Heart right ventricle (tissue), 16 donors: ENCODE measurements at regions of chr7 and their contacts with region 1.

Region 1: DNA sequence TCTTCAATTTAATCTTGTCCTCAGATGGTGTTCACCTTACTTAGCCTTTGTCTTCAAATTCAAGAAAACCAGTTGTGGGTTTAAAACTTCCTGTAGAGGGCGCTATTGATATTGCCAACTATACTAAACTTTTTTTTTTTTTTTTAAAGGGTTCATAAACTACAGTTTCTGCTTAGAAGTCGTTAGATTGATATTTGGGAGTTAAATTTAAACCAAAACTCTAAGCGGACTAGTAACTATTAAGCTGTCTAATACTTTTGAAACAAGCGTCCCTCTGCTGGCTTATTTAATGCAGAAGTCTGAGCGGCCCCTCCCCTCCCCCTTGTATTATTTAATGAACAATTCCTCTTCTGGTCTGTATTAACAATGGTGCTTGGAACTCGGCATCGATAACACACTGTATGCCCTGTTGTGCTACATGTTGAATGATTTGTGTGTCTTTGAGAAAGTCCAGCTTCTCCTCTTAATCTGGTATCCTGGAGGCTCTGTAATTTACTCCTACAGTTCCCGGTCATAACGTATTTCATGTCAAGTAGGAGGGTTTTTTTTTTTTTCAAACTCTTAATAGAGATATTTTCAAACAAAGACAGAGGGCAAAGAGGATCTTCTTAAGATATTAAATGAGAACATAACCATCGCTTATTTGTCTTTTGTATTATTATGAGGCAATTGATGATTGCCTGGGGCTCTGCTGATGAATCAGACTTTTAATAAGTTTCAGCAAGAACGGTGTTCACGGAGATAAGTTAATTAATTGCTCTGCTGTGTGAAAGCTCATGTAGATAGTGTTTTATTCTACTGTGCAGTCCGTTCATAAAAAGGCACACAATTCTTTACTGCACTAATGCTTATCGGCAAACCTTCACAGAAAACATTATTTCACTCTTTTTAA is 22.6 kb upstream of the CREB5 start:
- DNase-seq: peak in 1 of 2 donors; percentile 14
- ATAC-seq: peak in 6 of 8 donors; percentile 41 to 64 (median 48)
- H3K4me3 ChIP-seq: peak overlapping the region in 8 of 10 donors; percentile 10 to 48 (median 42)
- H3K27ac ChIP-seq: peak overlapping the region in 5 of 10 donors; percentile 8 to 42 (median 17)
- H3K4me1 ChIP-seq: peaks cover 0 to 6% (median 0%) of the 10 kb centered on the region in 9 donors
- H3K27me3 ChIP-seq: peaks cover 0 to 15% (median 0%) of the 10 kb centered on the region in 7 donors
- CTCF ChIP-seq: peak; percentile 75 to 91 (median 82)

Region 2: DNA sequence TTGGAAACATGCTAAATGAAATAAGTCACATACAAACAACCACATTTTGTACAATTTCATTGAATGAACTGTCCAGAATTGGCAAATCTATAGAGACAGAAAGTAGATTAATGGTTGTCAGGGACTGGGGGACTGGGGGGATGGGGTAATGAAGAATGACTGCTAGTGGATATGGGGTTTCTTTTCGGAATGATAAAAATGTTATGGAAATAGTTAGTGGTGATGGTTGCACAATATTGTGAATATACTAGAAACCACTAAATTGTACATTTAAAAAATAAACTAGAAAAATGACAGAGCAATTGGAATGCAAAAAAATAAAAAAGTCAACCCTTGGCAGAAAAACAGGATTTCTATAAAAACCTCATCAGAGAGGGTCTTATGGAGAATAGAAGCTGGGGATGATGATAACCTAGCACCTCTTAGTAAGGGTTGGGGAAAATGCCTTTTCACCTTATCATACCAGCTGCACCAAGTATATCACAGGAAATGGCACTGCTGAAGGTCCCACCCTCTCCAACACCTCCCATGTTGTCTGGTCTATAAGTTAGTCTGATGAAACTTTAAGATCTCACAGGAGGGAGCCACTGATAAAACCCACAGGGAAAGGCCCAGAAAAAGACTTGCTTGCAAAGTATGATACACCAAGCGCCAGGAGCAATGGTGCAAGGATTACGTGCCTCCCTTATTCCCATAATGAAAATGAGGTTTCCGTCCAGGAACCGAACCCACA is 186.1 kb before region 1 on chr7:
- intact Hi-C with region 1: no loop called
- DNase-seq: no peak
- ATAC-seq: no peak
- H3K4me3 ChIP-seq: no peak overlapping the region
- H3K27ac ChIP-seq: no peak overlapping the region
- H3K4me1 ChIP-seq: peaks cover 0 to 10% (median 0%) of the 10 kb centered on the region in 9 donors
- H3K27me3 ChIP-seq: peaks cover 0 to 3% (median 0%) of the 10 kb centered on the region in 7 donors
- CTCF ChIP-seq: no peak

Region 3: DNA sequence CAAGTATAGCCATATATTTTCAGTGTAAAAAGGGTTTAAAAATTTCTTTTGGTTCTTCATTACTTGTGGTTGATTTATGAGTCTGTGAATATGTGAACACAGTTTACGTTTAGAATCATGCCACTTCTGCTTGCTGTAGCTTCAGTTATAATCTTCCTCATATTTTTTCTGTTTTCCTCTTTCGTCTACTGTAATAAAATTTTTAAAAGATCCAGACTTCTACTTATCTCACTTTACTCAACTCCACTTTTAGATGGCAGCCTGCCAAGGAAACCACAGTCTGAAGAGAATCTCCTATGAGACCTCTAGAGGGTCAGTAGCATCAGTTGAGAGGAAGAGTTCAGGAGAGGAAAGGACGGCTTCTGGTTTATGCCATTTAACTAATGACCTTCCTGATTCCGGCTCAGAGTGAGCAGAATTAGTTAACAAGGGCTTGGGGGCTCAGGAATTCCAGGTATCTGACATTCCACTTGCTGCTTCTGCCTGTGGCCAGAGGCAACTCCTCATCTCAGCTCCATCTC is 44.0 kb after region 1 on chr7:
- intact Hi-C with region 1: no loop called
- DNase-seq: peak in 1 of 2 donors; percentile 23
- ATAC-seq: no peak
- H3K4me3 ChIP-seq: no peak overlapping the region
- H3K27ac ChIP-seq: no peak overlapping the region
- H3K4me1 ChIP-seq: peaks cover 0 to 14% (median 4%) of the 10 kb centered on the region in 9 donors
- H3K27me3 ChIP-seq: peaks cover 0 to 10% (median 0%) of the 10 kb centered on the region in 7 donors
- CTCF ChIP-seq: no peak

Region 4: DNA sequence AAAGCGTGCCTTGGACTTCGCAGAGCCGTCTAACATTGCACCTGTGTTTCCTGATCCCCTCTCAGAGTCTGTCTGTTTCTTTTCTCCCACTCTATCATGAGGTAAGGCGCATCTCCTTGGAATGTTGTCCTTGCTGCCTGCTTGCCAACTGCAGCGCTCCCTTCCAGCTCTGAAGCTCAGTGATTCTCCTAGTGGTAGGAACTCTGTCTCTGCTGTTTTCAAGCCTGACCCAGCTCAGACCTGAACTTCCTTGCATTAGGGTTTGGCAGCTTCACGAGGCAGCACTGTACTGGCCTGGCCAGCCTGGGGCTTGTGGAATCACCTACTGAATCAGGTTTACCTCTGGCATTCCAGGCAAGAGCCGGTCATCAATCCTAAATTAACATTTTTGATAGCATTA is 146.5 kb after region 1 on chr7:
- intact Hi-C with region 1: loop called in 1 of 10 experiments (anchors 10 kb)
- DNase-seq: no peak
- ATAC-seq: no peak
- H3K4me3 ChIP-seq: no peak overlapping the region
- H3K27ac ChIP-seq: no peak overlapping the region
- H3K4me1 ChIP-seq: peaks cover 4 to 21% (median 10%) of the 10 kb centered on the region in 9 donors
- H3K27me3 ChIP-seq: peaks cover 0 to 2% (median 0%) of the 10 kb centered on the region in 7 donors
- CTCF ChIP-seq: peak in 3 of 9 donors; percentile 27 to 33 (median 29)

Region 5: GRCh38 chr7:28615091-28615490 is 225.3 kb after region 1 on chr7:
- intact Hi-C with region 1: loop called in 3 of 10 experiments (anchors 5 to 10 kb)
- DNase-seq: no peak
- ATAC-seq: peak in 3 of 8 donors; percentile 32 to 46 (median 45)
- H3K4me3 ChIP-seq: no peak overlapping the region
- H3K27ac ChIP-seq: no peak overlapping the region
- H3K4me1 ChIP-seq: peaks cover 0 to 29% (median 8%) of the 10 kb centered on the region in 9 donors
- H3K27me3 ChIP-seq: no peaks in the 10 kb centered on the region
- CTCF ChIP-seq: peak in 7 of 9 donors; percentile 18 to 46 (median 28)

Region 6: GRCh38 chr7:28626624-28627262 is 237.0 kb after region 1 on chr7:
- intact Hi-C with region 1: loop called in 8 of 10 experiments (anchors 2 to 5 kb)
- DNase-seq: no peak
- ATAC-seq: peak in 1 of 8 donors; percentile 46
- H3K4me3 ChIP-seq: no peak overlapping the region
- H3K27ac ChIP-seq: peak overlapping the region in 5 of 10 donors; percentile 0 to 63 (median 1)
- H3K4me1 ChIP-seq: peaks cover 0 to 84% (median 42%) of the 10 kb centered on the region in 9 donors
- H3K27me3 ChIP-seq: no peaks in the 10 kb centered on the region
- CTCF ChIP-seq: peak; percentile 28 to 79 (median 71)

Region 7: GRCh38 chr7:28921822-28922221 is 532.1 kb after region 1 on chr7:
- intact Hi-C with region 1: loop called in 1 of 10 experiments (anchors 2 kb)
- DNase-seq: peak in 1 of 2 donors; percentile 58
- ATAC-seq: peak; percentile 85 to 95 (median 93)
- H3K4me3 ChIP-seq: peak overlapping the region in 1 of 10 donors; percentile 6
- H3K27ac ChIP-seq: no peak overlapping the region
- H3K4me1 ChIP-seq: peaks cover 0 to 27% (median 12%) of the 10 kb centered on the region in 9 donors
- H3K27me3 ChIP-seq: peaks cover 0 to 4% (median 0%) of the 10 kb centered on the region in 7 donors
- CTCF ChIP-seq: peak; percentile 81 to 90 (median 85)